Mammary epithelial cell (primary cell): ENCODE measurements at regions of chrX and their contacts with region 1.

Region 1: DNA sequence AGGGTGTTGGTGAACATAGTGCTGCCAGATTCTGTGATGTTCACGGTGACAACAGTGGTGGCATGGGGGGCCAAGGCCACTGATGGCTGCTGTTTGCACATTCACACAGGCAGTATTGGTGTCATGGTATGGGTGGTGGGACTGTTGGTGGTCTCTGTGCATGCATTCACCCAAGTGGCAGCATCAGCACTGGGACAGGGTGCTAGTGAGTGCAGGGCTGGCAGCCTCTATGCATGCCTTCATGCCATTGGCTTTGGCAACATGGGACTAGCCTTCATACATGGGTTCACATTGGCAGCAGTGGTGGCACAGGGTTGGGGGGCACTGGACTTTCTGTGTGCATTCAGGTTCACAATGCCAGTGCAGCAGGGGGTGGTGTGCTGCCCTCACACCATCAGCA is 489.7 kb upstream of the FGF16 start:
- DNase-seq: no peak
- H3K4me3 ChIP-seq: no peak overlapping the region
- H3K27ac ChIP-seq: no peak overlapping the region
- H3K4me1 ChIP-seq: no peaks in the 10 kb centered on the region
- H3K27me3 ChIP-seq: no peaks in the 10 kb centered on the region
- CTCF ChIP-seq: no peak

Region 2: DNA sequence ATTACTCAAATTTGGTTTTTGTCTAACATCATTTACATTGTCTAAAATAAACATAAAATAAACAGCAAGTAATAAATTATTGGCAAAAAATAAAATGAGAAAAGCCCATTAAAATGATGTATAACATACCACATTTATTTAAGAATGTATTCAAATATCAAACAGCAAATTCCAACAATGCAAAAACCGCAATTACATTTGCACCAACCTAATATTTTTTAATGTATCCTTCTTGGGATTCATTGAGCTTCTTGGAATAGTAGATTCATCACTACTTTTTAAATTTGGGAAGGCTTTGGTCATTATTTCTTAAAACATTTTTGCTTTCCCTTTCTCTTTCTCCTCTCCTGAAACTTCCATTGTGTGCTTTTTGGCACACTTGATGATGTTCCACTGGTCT is 129.8 kb before region 1 on chrX:
- CTCF ChIA-PET with region 1: no interaction called
- dilution Hi-C with region 1: no loop called
- in situ Hi-C with region 1: no loop called
- intact Hi-C with region 1: no loop called
- DNase-seq: no peak
- H3K4me3 ChIP-seq: no peak overlapping the region
- H3K27ac ChIP-seq: no peak overlapping the region
- H3K4me1 ChIP-seq: no peaks in the 10 kb centered on the region
- H3K27me3 ChIP-seq: no peaks in the 10 kb centered on the region
- CTCF ChIP-seq: no peak

Region 3: GRCh38 chrX:76996641-76997040 is 39.2 kb after region 1 on chrX:
- CTCF ChIA-PET with region 1: no interaction called
- dilution Hi-C with region 1: loop called (anchors 5 kb)
- in situ Hi-C with region 1: no loop called
- intact Hi-C with region 1: no loop called
- DNase-seq: no peak
- H3K4me3 ChIP-seq: no peak overlapping the region
- H3K27ac ChIP-seq: no peak overlapping the region
- H3K4me1 ChIP-seq: no peaks in the 10 kb centered on the region
- H3K27me3 ChIP-seq: no peaks in the 10 kb centered on the region
- CTCF ChIP-seq: no peak